ENCODE measurements at regions of chr7 and their contacts with region 1.

Region 1: GRCh38 chr7:50467817-50468610 is 17.9 kb upstream of the FIGNL1 start:
- DNase-seq: peak; percentile 80
- H3K4me3 ChIP-seq: no peak overlapping the region
- H3K27ac ChIP-seq: no peak overlapping the region
- H3K4me1 ChIP-seq: peaks cover 4% of the 10 kb centered on the region
- H3K27me3 ChIP-seq: no peaks in the 10 kb centered on the region
- CTCF ChIP-seq: peak; percentile 82 to 90
- POLR2A ChIP-seq: no peak

Region 2: DNA sequence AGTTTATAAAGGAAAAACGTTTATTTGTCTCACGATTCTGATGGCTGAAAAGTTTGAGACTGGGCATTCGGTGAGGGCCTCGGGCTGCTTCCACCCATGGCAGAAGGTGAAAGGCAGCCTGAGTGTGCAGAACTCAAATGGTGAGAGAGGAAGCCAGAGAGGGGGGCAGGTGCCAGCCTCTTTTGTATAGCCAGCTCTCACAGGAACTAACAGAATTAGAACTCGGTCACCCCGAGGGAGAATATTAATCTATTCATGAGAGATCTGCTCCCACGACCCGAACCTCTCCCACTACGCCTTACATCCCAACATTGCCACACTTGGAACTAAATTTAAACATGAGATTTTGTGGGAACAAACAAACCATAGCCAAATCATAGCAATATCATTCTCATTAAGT is 487.5 kb before region 1 on chr7:
- CTCF ChIA-PET with region 1: no interaction called
- POLR2A ChIA-PET with region 1: no interaction called
- dilution Hi-C with region 1: no loop called
- intact Hi-C with region 1: no loop called
- DNase-seq: no peak
- H3K4me3 ChIP-seq: no peak overlapping the region
- H3K27ac ChIP-seq: no peak overlapping the region
- H3K4me1 ChIP-seq: no peaks in the 10 kb centered on the region
- H3K27me3 ChIP-seq: no peaks in the 10 kb centered on the region
- CTCF ChIP-seq: no peak
- POLR2A ChIP-seq: no peak

Region 3: GRCh38 chr7:50206453-50207250 is 261.4 kb before region 1 on chr7:
- CTCF ChIA-PET with region 1: interaction called, 3 read pairs
- POLR2A ChIA-PET with region 1: no interaction called
- dilution Hi-C with region 1: no loop called
- intact Hi-C with region 1: loop called (anchors 5 kb)
- DNase-seq: no peak
- H3K4me3 ChIP-seq: no peak overlapping the region
- H3K27ac ChIP-seq: no peak overlapping the region
- H3K4me1 ChIP-seq: no peaks in the 10 kb centered on the region
- H3K27me3 ChIP-seq: no peaks in the 10 kb centered on the region
- CTCF ChIP-seq: no peak
- POLR2A ChIP-seq: no peak

Region 4: DNA sequence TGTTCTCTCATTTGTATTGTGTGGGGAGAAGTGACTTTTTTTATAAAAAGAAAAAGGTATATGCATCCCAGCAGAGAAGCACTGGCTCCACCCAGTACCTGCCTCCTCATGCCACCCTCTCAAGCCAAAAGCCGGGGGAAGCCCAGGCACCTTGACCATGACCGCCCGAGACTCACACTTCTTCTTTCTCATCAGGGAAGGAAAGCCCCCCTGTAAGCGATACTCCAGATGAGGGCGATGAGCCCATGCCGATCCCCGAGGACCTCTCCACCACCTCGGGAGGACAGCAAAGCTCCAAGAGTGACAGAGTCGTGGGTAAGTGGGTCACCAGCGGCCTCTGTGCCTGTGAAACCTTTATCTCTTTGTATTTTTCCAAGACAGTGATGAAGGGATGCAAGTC is 140.6 kb before region 1 on chr7:
- CTCF ChIA-PET with region 1: no interaction called
- POLR2A ChIA-PET with region 1: no interaction called
- dilution Hi-C with region 1: no loop called
- intact Hi-C with region 1: no loop called
- DNase-seq: no peak
- H3K4me3 ChIP-seq: no peak overlapping the region
- H3K27ac ChIP-seq: no peak overlapping the region
- H3K4me1 ChIP-seq: no peaks in the 10 kb centered on the region
- H3K27me3 ChIP-seq: peaks cover 2% of the 10 kb centered on the region in 2 experiments
- CTCF ChIP-seq: no peak
- POLR2A ChIP-seq: no peak

Region 5: DNA sequence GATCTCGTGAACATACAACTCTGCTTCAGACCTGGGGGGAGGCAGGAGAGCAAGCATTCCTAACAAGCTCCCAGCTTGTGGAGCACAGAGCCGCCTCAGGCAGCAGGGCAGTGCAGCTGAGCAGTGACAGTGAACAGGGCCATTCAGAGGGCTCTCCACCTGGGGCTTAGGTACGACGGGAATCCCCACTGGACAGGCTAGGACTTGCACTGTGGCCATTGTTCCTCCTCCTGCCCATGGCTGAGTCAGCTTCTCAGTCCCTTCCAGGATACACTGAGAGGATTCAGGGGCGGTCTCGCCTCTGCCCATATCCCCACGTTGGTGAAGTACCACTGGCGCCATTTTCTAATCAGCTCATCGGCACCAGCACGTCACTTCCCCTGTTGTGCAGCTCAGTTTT is 88.9 kb before region 1 on chr7:
- CTCF ChIA-PET with region 1: no interaction called
- POLR2A ChIA-PET with region 1: no interaction called
- dilution Hi-C with region 1: no loop called
- intact Hi-C with region 1: no loop called
- DNase-seq: no peak
- H3K4me3 ChIP-seq: no peak overlapping the region
- H3K27ac ChIP-seq: no peak overlapping the region
- H3K4me1 ChIP-seq: no peaks in the 10 kb centered on the region
- H3K27me3 ChIP-seq: no peaks in the 10 kb centered on the region
- CTCF ChIP-seq: no peak
- POLR2A ChIP-seq: no peak

Region 6: GRCh38 chr7:50534690-50535290 is 66.8 kb after region 1 on chr7:
- CTCF ChIA-PET with region 1: interaction called, 10 read pairs
- POLR2A ChIA-PET with region 1: no interaction called
- dilution Hi-C with region 1: no loop called
- intact Hi-C with region 1: loop called (anchors 2 kb)
- DNase-seq: peak; percentile 94
- H3K4me3 ChIP-seq: no peak overlapping the region
- H3K27ac ChIP-seq: peak overlapping the region; percentile 33
- H3K4me1 ChIP-seq: peaks cover 13% of the 10 kb centered on the region
- H3K27me3 ChIP-seq: no peaks in the 10 kb centered on the region
- CTCF ChIP-seq: no peak
- POLR2A ChIP-seq: no peak

Region 7: GRCh38 chr7:50595491-50596102 is 127.6 kb after region 1 on chr7:
- CTCF ChIA-PET with region 1: interaction called, 22 read pairs
- POLR2A ChIA-PET with region 1: no interaction called
- dilution Hi-C with region 1: no loop called
- intact Hi-C with region 1: no loop called
- DNase-seq: peak; percentile 29
- H3K4me3 ChIP-seq: no peak overlapping the region
- H3K27ac ChIP-seq: no peak overlapping the region
- H3K4me1 ChIP-seq: peaks cover 3% of the 10 kb centered on the region
- H3K27me3 ChIP-seq: no peaks in the 10 kb centered on the region
- CTCF ChIP-seq: peak; percentile 47 to 55
- POLR2A ChIP-seq: no peak

Region 8: GRCh38 chr7:50632561-50633413 is 164.8 kb after region 1 on chr7:
- CTCF ChIA-PET with region 1: interaction called, 5 read pairs
- POLR2A ChIA-PET with region 1: no interaction called
- dilution Hi-C with region 1: no loop called
- intact Hi-C with region 1: loop called (anchors 1 kb)
- DNase-seq: peak; percentile 71
- H3K4me3 ChIP-seq: no peak overlapping the region
- H3K27ac ChIP-seq: no peak overlapping the region
- H3K4me1 ChIP-seq: peaks cover 4% of the 10 kb centered on the region
- H3K27me3 ChIP-seq: no peaks in the 10 kb centered on the region
- CTCF ChIP-seq: peak; percentile 81 to 82
- POLR2A ChIP-seq: no peak

Region 9: GRCh38 chr7:50711257-50712175 is 243.5 kb after region 1 on chr7:
- CTCF ChIA-PET with region 1: no interaction called
- POLR2A ChIA-PET with region 1: no interaction called
- dilution Hi-C with region 1: no loop called
- intact Hi-C with region 1: no loop called
- DNase-seq: no peak
- H3K4me3 ChIP-seq: no peak overlapping the region
- H3K27ac ChIP-seq: no peak overlapping the region
- H3K4me1 ChIP-seq: no peaks in the 10 kb centered on the region
- H3K27me3 ChIP-seq: no peaks in the 10 kb centered on the region
- CTCF ChIP-seq: no peak
- POLR2A ChIP-seq: no peak

Region 10: DNA sequence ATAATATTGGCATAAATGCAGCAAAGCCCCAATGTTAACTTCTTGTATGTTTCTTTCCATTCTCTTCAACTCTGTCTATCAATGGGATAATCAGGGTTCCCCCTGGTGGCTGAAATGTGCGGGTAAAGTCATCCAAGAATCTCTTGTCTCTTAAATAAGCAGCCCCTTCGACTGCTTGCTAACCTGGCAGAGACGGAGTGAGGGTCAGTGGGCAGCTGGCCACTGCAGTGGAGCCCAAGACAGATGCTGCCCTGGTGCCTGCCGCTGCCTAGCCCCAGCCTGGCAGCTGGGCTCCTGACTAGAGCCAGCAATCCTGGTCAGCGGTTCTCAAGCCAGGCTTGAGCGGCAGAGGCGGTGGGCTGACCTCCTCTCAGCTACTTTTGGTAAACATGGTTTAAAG is 599.7 kb after region 1 on chr7:
- CTCF ChIA-PET with region 1: no interaction called
- POLR2A ChIA-PET with region 1: no interaction called
- dilution Hi-C with region 1: no loop called
- intact Hi-C with region 1: loop called (anchors 1 kb)
- DNase-seq: peak; percentile 89
- H3K4me3 ChIP-seq: no peak overlapping the region
- H3K27ac ChIP-seq: no peak overlapping the region
- H3K4me1 ChIP-seq: peaks cover 26% of the 10 kb centered on the region
- H3K27me3 ChIP-seq: no peaks in the 10 kb centered on the region
- CTCF ChIP-seq: peak; percentile 69 to 70
- POLR2A ChIP-seq: no peak